Activated CD8-positive, alpha-beta memory T cell treated with anti-CD3 and anti-CD28 coated beads, Interleukin-2, amount 10 ng/mL, durations not matched to agents 7 days and 5 days (primary cell): ENCODE measurements at regions of chr14 and their contacts with region 1.

Region 1: GRCh38 chr14:22852940-22853767 is 16.8 kb downstream of the MMP14 start:
- DNase-seq: peak; percentile 93
- ATAC-seq: peak; percentile 87
- H3K4me3 Mint-ChIP-seq: peak overlapping the region; percentile 70
- H3K27ac Mint-ChIP-seq: peak overlapping the region; percentile 79
- H3K4me1 Mint-ChIP-seq: peaks cover 37% of the 10 kb centered on the region
- H3K27me3 Mint-ChIP-seq: peaks cover 32% of the 10 kb centered on the region

Region 2: DNA sequence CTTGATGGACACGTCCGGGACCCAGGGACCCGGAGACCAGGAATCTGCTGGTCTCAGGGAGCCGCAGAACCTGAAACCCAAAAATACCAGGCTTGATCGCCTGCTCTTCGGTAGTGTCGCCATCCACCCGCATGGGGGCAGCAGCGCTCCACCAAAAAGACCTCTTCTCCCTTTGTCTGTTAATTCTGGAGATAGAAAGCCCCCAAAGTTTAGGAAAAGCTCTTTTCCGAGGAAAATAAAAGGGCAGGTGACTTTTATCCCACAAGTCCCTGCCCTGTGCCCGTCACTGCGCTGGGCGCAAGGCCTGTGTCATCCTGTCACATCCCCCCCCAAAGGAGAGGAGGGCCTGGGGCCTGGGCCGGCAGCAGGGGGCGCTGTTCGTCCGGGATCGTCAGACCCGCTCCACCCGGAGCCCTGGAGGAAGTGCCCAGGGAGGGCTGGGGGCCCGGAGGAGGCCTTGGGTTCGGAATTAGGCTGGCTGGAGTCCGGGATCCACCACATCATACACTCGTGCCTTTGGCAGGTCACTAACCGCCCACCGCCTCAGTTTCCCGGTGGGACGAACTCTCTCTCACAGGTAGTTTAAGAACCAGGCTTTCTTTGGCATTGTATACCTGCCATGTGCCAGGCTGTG is 296.0 kb before region 1 on chr14:
- CTCF ChIA-PET with region 1: interaction called, 23 read pairs
- DNase-seq: peak; percentile 95
- ATAC-seq: peak; percentile 34
- H3K4me3 Mint-ChIP-seq: peak overlapping the region; percentile 68
- H3K27ac Mint-ChIP-seq: peak overlapping the region; percentile 94
- H3K4me1 Mint-ChIP-seq: peaks cover 91% of the 10 kb centered on the region
- H3K27me3 Mint-ChIP-seq: peaks cover 3% of the 10 kb centered on the region

Region 3: DNA sequence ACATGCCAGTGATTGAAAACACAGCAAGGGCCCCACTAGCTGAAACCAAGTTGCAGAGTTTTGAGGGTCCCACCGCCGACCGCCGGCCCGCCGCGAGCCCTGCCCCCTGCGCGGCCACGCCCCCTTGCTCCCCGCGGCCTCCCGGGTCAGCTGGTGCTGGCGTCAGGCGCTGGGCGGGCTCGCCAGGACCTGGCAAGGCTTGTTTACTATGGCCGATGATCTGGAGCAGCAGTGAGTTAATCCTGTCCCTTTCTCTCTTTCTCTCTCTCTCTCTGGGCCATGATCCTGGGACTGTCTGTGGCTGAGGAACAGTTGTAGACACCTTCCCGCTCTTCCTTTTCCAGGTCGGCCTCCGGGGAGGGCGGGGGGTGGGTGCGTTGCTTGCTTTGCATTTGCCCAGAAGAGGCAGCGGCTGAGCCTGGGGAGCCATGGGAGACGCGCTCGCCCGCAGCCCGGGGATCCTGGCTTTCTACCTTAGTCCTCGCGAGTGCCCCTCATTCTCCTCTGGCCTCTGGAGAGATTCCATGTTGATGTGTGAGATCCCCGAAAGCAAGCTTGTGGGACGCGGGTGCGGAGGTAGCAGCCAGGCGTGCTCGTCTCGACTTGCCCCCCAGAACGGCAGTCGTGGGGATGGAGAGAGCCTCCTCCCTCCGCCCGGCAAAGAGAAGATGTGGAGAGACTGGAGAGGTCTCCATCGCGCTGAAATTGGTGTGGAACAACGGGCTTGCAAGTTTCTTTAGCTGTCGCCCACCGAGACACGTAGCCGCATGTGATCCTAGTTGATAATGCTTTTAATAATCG is 254.9 kb before region 1 on chr14 and contains the start of gene ABHD4:
- CTCF ChIA-PET with region 1: interaction called, 15 read pairs
- DNase-seq: peak; percentile 82
- ATAC-seq: peak; percentile 91
- H3K4me3 Mint-ChIP-seq: peak within 1 kb of the TSS; percentile 92
- H3K27ac Mint-ChIP-seq: peak within 1 kb of the TSS; percentile 85
- H3K4me1 Mint-ChIP-seq: peaks cover 29% of the 10 kb centered on the region
- H3K27me3 Mint-ChIP-seq: peaks cover 3% of the 10 kb centered on the region
- total RNA-seq, gene ABHD4: 11.8 to 13.8 TPM

Region 4: DNA sequence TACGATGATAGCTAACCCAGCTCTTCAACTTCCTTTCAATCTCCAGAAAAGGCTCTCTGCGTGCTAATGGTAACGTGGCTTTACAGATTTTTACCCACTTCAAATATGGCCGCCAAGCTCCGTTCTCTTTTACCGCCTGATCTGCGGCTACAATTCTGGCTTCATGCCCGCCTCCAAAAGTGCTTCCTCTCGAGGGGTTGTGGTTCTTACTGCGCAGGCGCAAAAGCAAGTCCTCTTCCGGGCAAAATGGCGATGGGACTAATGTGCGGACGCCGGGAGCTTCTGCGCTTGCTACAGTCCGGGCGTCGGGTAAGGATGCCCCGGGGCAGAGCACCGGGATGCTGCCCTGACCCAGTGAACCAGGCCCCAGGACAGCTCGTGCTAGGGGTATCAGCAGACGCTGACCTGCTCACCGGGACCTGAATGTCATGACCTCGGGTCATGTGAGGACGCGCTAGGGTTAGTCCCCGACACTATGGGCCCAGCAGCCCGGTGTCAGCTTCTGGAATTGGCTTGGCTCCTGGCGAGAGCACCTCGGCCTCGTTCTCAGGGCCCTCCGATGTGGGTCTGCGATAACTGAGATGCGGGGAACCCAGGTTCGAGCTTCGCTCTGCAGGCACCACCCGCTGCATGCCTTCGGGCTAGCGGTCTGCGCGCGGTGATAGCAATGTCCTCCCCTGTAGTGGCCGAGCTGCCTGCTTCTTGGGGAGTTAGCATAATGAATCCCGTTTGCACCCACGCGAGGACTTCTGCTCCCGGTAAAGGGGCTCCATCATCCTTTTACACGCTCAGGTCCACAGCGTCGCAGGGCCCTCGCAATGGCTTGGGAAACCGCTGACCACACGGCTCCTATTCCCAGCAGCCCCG is 86.5 kb before region 1 on chr14 and contains the start of gene OXA1L:
- CTCF ChIA-PET with region 1: interaction called, 20 read pairs
- DNase-seq: peak; percentile 98
- ATAC-seq: peak; percentile 92
- H3K4me3 Mint-ChIP-seq: peak within 1 kb of the TSS; percentile 86
- H3K27ac Mint-ChIP-seq: peak within 1 kb of the TSS; percentile 97
- H3K4me1 Mint-ChIP-seq: peaks cover 35% of the 10 kb centered on the region
- H3K27me3 Mint-ChIP-seq: no peaks in the 10 kb centered on the region
- total RNA-seq, gene OXA1L: 106 to 133 TPM

Region 5: DNA sequence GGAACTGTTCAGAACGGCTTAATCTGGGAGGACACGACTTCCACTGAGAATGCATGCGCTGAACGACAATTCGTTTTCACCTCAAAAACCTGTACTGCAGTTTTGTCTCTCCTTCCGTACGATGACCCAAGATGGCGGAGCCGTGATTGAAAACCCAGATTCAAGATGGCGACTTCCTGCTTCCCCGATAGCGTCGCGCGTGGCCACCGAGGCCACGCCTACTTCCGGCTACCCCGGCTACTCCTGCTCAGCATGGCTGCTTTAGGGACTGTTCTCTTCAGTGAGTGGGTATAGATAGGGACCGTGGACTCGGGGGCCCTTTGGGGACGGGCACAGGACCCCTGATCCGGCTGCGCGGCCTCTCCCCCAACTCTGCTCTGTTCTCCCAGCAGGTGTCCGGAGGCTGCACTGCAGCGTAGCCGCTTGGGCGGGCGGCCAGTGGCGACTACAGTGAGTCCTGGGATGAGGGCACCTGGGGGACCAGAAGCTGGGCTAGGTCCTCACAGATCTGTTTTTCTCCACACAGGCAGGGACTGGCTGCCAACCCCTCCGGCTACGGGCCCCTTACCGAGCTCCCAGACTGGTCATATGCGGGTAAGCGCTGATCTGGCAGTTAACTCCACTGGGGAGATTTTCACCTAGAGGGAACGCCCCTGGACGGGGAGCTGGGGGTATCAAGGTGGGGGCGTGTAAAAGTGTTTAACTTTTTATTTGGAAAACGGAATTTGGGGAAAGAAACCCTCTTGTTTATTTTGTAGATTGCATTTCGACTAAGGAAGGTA is 23.3 kb before region 1 on chr14 and contains the start of gene MRPL52:
- CTCF ChIA-PET with region 1: interaction called, 239 read pairs
- DNase-seq: peak; percentile 95
- ATAC-seq: peak; percentile 96
- H3K4me3 Mint-ChIP-seq: peak within 1 kb of the TSS; percentile 92
- H3K27ac Mint-ChIP-seq: peak within 1 kb of the TSS; percentile 96
- H3K4me1 Mint-ChIP-seq: peaks cover 27% of the 10 kb centered on the region
- H3K27me3 Mint-ChIP-seq: peaks cover 3% of the 10 kb centered on the region
- total RNA-seq, gene MRPL52: 107 to 147 TPM

Region 6: DNA sequence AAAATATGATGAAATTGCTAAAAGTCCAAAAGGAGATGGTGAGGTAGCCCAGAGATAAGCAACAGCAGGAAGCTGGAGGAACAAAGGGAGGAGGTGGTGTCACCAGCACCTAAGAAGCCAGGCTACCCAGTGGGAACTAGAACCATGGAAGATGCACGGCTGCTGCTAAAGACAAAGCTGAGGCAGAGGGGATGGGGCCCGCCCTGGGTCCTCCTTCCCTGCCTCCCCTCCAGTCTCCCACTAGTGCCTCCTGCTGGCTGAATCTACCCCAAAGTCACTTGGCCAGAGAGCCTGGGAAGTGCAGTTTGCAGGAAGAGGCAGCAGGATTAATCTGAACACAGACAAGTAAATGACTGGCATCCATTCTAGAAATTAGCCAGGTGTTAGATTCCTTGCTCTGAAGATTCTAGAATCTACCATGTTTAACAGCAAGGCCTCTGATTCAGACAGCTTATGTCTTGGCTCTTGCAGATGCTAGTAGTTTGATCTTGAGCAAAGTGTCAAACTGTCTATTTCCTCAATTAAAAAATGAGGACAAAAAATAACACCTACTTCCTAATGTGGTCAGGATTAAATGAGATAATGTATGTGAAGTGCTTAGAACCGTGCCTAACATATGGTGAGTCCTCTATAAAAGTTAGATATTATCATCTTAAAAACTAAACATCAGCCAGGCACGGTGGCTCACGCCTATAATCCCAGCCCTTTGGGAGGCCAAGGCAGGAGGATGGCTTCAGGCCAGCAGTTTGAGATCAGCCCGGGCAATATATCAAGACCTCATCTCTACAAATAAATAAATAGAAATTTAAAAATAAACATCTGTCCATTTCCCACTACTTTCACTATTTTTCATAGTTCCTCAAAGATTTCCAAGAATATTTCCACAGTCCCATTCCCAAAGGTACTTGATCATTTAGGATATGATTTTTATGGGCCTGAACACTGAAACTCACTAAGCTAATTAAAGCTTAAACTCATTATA is 12.6 kb after region 1 on chr14:
- CTCF ChIA-PET with region 1: interaction called, 61 read pairs
- DNase-seq: no peak
- ATAC-seq: no peak
- H3K4me3 Mint-ChIP-seq: no peak overlapping the region
- H3K27ac Mint-ChIP-seq: no peak overlapping the region
- H3K4me1 Mint-ChIP-seq: peaks cover 9% of the 10 kb centered on the region
- H3K27me3 Mint-ChIP-seq: peaks cover 18% of the 10 kb centered on the region

Region 7: DNA sequence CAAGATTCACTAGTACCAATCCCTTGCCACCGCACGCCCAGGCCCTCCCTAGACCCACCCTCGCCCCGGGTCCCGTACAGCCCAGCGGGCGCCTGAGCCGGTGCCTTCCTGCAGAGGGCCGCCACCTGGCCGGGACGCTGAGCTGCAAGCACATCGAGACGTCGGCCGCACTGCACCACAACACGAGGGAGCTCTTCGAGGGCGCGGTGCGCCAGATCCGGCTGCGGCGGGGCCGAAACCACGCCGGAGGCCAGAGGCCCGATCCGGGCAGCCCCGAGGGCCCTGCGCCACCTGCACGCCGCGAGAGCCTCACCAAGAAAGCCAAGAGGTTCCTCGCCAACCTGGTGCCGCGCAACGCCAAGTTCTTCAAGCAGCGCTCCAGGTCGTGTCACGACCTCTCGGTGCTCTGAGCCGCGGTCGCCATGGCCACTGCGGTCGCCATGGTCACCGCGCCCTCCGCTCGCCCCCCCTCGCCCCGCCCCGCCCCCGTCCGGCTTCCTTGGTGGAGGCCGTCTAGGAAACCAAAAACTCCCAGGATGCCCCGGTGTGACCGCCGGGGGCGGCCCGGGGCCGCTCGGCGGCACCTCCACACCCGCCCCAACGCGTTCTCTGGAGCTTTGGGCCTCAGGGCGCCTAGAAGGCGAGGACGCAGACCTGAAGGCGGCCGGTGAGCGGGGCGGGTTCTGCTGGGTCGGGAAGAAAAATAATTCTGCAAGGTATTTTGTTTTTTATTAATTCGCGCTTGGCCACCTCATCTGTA is 33.5 kb after region 1 on chr14:
- CTCF ChIA-PET with region 1: interaction called, 13 read pairs
- DNase-seq: peak; percentile 83
- ATAC-seq: peak; percentile 84
- H3K4me3 Mint-ChIP-seq: peak overlapping the region; percentile 77
- H3K27ac Mint-ChIP-seq: peak overlapping the region; percentile 80
- H3K4me1 Mint-ChIP-seq: peaks cover 36% of the 10 kb centered on the region
- H3K27me3 Mint-ChIP-seq: peaks cover 37% of the 10 kb centered on the region